ENCODE measurements at regions of chr5 and their contacts with region 1.

Region 1: DNA sequence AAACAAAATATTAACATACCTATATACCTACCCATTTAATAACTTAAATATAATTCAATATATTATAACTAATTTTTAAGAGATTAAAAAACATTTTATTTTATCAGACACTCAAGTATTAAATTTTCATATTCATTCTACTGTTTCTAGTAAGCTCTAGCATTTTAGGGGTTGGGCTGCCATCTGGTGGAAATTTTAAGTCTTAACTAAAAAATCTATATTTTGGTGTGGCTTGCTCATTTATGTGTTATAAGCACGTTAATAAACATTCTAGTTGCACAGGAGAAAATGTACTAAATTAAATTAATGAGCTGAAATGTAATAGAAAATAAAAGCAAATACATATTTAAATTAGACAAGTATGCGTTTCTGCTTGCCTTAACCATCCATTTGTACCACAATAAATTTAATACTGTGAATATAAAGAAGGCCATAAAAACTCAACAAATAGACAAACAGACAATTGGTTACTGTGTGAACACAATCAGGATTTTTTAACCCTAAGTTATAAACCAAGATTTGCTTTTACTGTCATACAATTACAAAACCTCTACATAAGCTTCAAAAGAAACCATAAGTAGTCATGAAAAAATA is 1728.3 kb upstream of the CDH9 start:
- DNase-seq: no peak
- ATAC-seq: no peak
- H3K4me3 ChIP-seq: no peak overlapping the region
- H3K27ac ChIP-seq: no peak overlapping the region
- H3K4me1 ChIP-seq: no peaks in the 10 kb centered on the region
- H3K27me3 ChIP-seq: no peaks in the 10 kb centered on the region
- CTCF ChIP-seq: peak in 6 of 12 donors; percentile 16 to 49 (median 40)
- POLR2A ChIP-seq: no peak

Region 2: DNA sequence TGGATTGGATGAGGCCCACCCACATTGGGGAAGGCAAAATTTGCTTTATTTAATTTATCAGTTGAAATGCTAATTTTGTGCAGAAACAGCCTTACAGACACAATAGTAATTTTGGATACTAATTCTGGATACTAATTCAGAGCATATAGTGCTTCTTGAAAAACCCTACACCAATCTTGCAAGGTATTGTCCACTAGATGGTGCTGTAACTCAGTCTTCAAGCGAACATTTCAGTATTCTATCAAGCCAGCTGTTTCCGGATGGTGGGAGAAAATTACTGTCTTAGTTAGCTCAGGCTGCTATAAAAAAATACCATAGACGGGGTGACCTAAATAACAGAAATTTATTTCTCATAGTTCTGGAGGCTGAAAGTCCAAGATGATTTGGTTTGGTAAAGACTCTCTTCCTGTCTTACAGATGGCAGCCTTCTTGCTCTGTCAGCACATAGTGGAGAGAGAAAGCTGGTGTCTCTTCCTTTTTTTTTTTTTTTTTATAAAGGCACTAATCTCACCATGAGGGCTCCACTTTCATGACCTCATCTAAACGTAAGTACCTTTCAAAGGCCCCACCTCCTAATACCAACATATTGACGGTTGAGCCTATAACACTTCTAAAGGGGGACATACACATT is 421.7 kb before region 1 on chr5:
- intact Hi-C with region 1: loop called in 1 of 10 experiments (anchors 5 kb)
- DNase-seq: no peak
- ATAC-seq: no peak
- H3K4me3 ChIP-seq: no peak overlapping the region
- H3K27ac ChIP-seq: no peak overlapping the region
- H3K4me1 ChIP-seq: no peaks in the 10 kb centered on the region
- H3K27me3 ChIP-seq: no peaks in the 10 kb centered on the region
- CTCF ChIP-seq: peak in 6 of 12 donors; percentile 16 to 40 (median 36)
- POLR2A ChIP-seq: no peak

Region 3: DNA sequence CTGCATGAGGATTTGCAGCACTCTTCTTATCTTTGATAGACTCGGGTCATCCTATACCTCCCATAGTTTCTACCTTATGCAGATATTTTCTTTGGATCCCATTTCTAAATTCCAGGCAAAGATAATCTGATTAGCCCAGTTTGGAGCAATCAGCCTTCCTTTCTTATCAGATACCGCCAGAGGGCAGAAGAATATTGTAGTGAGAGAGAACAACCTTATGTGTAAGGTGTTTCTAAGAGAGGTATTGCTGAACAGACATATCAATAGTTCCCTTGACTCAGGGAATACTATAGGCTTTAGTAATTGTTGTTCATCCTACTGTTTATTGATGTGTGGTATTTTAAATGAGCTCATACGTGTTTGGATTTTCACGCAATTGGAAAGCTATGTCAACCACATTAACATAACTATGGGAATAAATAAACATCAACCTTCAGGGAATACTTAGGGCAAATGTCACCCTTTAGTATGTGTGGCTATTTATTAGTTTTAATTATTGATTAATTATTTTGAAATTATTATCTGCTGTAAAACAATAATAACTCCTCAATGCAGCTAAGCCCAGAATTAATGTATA is 293.0 kb before region 1 on chr5:
- intact Hi-C with region 1: no loop called
- DNase-seq: no peak
- ATAC-seq: no peak
- H3K4me3 ChIP-seq: no peak overlapping the region
- H3K27ac ChIP-seq: no peak overlapping the region
- H3K4me1 ChIP-seq: no peaks in the 10 kb centered on the region
- H3K27me3 ChIP-seq: no peaks in the 10 kb centered on the region
- CTCF ChIP-seq: no peak
- POLR2A ChIP-seq: no peak

Region 4: DNA sequence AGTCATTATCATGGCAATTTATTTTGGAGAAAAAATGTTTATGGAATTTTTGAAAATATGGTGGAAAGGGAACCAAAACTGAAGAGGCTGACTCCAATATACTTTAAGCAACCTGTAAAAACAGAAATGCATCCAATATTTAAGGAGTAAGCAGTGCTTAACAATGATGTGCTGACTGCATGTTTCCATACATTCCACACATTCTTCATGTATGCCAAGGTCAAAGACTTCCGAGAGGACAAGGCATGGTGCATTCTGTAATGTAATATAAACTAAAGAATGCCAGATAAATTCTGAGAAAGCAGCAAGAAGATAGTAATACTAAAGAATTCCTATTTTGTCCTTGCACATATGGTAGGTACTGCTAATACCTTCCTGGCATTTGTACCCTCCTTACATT is 287.6 kb after region 1 on chr5:
- intact Hi-C with region 1: no loop called
- DNase-seq: no peak
- ATAC-seq: no peak
- H3K4me3 ChIP-seq: no peak overlapping the region
- H3K27ac ChIP-seq: no peak overlapping the region
- H3K4me1 ChIP-seq: no peaks in the 10 kb centered on the region
- H3K27me3 ChIP-seq: no peaks in the 10 kb centered on the region
- CTCF ChIP-seq: no peak
- POLR2A ChIP-seq: no peak

Measured in heart left ventricle (tissue), 16 donors.